ENCODE measurements at regions of chr5 and their contacts with region 1.

Region 1: GRCh38 chr5:163459922-163460766 is at the starts of genes HMMR and NUDCD2:
- DNase-seq: peak; percentile 93
- ATAC-seq: peak; percentile 94
- H3K4me3 Mint-ChIP-seq: peak within 1 kb of the TSS; percentile 99
- H3K27ac Mint-ChIP-seq: peak within 1 kb of the TSS; percentile 100
- H3K4me1 Mint-ChIP-seq: peaks cover 30% of the 10 kb centered on the region
- H3K27me3 Mint-ChIP-seq: peaks cover 3% of the 10 kb centered on the region
- CTCF ChIP-seq: no peak
- total RNA-seq, gene HMMR: 69.1 to 78.5 TPM (median 73.3 TPM) in 3 replicates
- total RNA-seq, gene NUDCD2: 68.5 to 73.4 TPM (median 69.4 TPM) in 3 replicates

Region 2: GRCh38 chr5:163401271-163401670 is 58.9 kb before region 1 on chr5:
- CTCF ChIA-PET with region 1: no interaction called
- POLR2A ChIA-PET with region 1: no interaction called
- DNase-seq: no peak
- ATAC-seq: no peak
- H3K4me3 Mint-ChIP-seq: no peak overlapping the region
- H3K27ac Mint-ChIP-seq: no peak overlapping the region
- H3K4me1 Mint-ChIP-seq: no peaks in the 10 kb centered on the region
- H3K27me3 Mint-ChIP-seq: no peaks in the 10 kb centered on the region
- CTCF ChIP-seq: no peak

Region 3: DNA sequence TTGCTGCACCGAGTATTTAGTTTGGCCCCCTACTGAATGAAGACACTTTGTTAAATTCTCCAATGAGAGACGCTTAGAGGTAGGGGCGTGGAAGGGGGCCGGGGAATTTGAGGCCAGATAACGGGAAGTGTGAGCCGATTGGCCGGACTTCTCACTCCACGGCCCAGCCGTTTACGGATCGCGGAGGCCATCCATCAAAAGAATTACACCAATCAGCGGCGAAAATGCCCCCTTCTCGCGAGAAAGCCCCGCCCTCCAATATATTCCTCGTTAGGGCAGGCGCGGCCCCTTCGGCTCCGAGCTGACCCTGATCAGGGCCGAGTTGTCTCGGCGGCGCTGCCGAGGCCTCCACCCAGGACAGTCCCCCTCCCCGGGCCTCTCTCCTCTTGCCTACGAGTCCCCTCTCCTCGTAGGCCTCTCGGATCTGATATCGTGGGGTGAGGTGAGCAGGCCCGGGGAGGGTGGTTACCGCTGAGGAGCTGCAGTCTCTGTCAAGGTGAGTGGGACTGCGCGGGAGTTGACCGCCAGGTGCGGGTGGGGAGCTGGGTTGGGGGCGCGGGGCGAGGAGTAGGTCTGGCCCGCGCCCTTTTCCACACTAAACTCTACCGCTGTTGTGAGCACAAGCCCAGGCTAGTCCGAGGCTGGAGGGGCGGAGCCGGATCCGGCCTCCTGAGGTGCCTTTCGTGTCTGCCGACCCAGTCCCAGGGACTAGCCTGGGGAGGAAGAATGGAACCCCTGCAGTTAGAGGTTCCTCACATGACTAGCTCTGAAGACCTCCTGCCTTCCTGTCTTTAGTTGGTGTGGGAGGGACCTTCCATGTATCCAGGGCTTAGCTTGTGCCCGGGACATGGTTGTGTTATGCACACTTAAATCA is 22.6 kb before region 1 on chr5 and contains the start of gene CCNG1:
- CTCF ChIA-PET with region 1: interaction called, 11 read pairs
- POLR2A ChIA-PET with region 1: interaction called, 61 read pairs
- DNase-seq: peak; percentile 95
- ATAC-seq: peak; percentile 93
- H3K4me3 Mint-ChIP-seq: peak within 1 kb of the TSS; percentile 95
- H3K27ac Mint-ChIP-seq: peak within 1 kb of the TSS; percentile 96
- H3K4me1 Mint-ChIP-seq: peaks cover 44% of the 10 kb centered on the region
- H3K27me3 Mint-ChIP-seq: no peaks in the 10 kb centered on the region
- CTCF ChIP-seq: no peak
- total RNA-seq, gene CCNG1: 395 to 438 TPM (median 433 TPM) in 3 replicates

Region 4: DNA sequence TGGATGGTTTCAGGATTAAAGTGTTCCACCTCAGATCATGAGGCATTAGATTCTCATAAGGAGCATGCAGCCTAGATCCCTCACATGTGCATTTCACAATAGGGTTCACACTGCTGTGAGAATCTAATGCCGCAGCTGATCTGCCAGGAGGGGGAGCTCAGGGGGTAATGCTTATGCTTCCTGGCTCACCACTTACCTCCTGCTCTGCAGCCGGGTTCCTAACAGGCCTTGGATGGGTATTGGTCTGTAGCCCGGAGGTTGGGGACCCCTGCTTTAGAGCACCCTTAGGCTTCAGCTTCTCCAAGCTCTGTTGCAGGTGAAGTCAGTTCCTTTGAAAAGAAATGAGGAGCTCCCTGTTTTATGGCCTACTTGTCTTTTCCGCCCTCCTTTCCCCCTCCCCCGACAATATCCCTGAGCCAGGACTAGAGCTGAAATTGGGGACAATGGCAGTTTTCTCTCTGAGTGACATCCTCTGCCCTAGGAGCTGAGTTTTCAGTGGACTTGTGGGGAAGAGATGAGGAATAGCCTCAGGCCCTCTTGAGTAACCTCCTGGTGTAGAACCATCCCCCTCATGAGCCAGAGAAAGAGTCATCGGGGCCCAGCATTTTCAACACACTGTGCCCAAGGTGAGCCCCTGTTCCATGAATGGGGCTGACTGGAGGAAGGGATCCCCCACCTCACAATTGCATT is 29.1 kb after region 1 on chr5:
- CTCF ChIA-PET with region 1: interaction called, 11 read pairs
- POLR2A ChIA-PET with region 1: no interaction called
- DNase-seq: peak; percentile 60
- ATAC-seq: peak; percentile 99
- H3K4me3 Mint-ChIP-seq: no peak overlapping the region
- H3K27ac Mint-ChIP-seq: no peak overlapping the region
- H3K4me1 Mint-ChIP-seq: peaks cover 8% of the 10 kb centered on the region
- H3K27me3 Mint-ChIP-seq: no peaks in the 10 kb centered on the region
- CTCF ChIP-seq: 0 out of 2 replicates have a peak, but pooled peaks have one; percentile 8

Measured in WTC11 (cell line).